ENCODE measurements at regions of chr1 and their contacts with region 1.

Region 1: DNA sequence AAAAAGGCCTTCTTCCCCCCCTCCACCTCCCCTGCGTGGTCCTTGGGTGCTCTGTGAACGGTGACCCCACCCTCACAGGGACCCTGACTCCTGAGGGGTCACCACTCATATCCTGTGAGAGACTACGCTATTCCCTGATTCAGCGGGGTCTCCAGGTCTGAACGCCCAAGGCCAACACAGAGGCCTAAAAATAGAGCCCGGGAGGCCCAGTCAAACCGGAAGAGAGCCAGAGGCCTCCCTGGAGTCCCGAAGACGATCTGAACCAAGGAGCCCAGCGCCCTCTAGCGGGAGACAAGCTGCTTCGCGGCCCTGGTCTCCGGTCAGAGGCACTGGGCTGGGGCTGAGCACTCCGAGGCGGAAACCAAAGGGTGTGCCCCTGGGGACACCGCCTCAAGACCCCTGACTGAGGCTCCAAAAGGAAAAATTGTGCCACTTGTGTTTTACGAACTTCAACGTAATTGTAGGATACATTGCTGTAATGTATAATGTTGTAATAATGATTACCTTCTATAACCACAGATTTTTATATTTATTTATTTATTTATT is 42.4 kb upstream of the PSEN2 start:
- DNase-seq: peak; percentile 95 to 97 (median 96)
- ATAC-seq: peak; percentile 100
- H3K4me3 ChIP-seq: no peak overlapping the region
- H3K27ac ChIP-seq: no peak overlapping the region; the same call in 2 of the 3 replicates
- H3K4me1 ChIP-seq: peaks cover 5 to 7% of the 10 kb centered on the region in 2 experiments; a peak in 3 of 5 replicates
- H3K27me3 ChIP-seq: peaks cover 46 to 59% of the 10 kb centered on the region in 2 experiments
- CTCF ChIP-seq: peak; percentile 95 to 97 (median 96)
- EP300 ChIP-seq: no peak
- POLR2A ChIP-seq: no peak
- RAD21 ChIP-seq: peak; percentile 94 to 99

Region 2: GRCh38 chr1:226547754-226548191 is 280.3 kb before region 1 on chr1:
- CTCF ChIA-PET with region 1: no interaction called
- POLR2A ChIA-PET with region 1: no interaction called
- in situ Hi-C with region 1: no loop called
- intact Hi-C with region 1: loop called (anchors 5 kb)
- DNase-seq: peak; percentile 69 to 83 (median 77)
- ATAC-seq: peak; percentile 97
- H3K4me3 ChIP-seq: no peak overlapping the region
- H3K27ac ChIP-seq: no peak overlapping the region
- H3K4me1 ChIP-seq: peaks cover 0 to 18% of the 10 kb centered on the region in 2 experiments; a peak in 3 of 5 replicates
- H3K27me3 ChIP-seq: peaks cover 7 to 48% of the 10 kb centered on the region in 2 experiments
- CTCF ChIP-seq: peak; percentile 92 to 97 (median 97)
- EP300 ChIP-seq: no peak
- POLR2A ChIP-seq: no peak
- RAD21 ChIP-seq: peak; percentile 86 to 88

Region 3: DNA sequence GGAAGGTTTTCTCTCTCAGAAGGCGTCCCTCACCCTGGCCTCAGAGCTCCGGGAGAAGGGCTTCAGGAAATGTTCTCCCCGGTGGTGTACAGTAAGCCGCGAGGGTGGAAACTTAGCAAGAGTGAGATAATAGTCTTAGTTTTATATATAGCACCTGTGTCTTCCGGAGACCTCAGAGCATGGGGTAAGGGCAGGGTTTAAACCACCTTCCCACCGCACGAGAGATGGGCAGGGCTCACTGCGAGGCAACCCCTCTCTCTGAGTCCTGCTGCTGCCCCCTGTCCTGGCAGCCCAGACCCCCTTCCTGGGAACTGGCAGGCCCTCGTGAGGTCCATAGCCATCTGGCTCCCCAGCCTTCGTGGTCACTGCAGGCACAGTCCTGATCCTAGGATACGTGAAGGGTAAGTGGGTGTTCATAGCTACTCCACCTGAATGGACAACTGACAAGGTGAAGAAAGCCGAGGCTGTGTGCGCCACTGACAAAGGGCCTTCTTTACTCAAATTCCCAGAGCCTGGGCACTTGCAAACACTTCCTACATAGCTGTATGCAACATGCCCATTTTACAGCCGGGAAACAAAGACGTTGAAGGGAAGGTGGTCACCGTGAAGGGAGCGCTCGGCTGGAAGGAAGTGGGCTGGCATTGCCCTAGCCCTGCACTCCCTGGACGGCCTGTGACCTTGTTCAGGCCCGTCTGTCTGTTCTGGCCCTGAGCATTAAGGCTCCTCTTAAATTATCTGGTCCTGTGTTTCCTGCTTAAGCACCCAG is 115.9 kb before region 1 on chr1:
- CTCF ChIA-PET with region 1: no interaction called
- POLR2A ChIA-PET with region 1: interaction called, 3 read pairs
- in situ Hi-C with region 1: no loop called
- intact Hi-C with region 1: loop called (anchors 2 kb)
- DNase-seq: no peak
- ATAC-seq: no peak
- H3K4me3 ChIP-seq: no peak overlapping the region
- H3K27ac ChIP-seq: no peak overlapping the region
- H3K4me1 ChIP-seq: 0 out of 5 replicates have a peak, but pooled peaks cover 0 to 4% of the 10 kb centered on the region in 2 experiments
- H3K27me3 ChIP-seq: peaks cover 31 to 50% of the 10 kb centered on the region in 2 experiments
- CTCF ChIP-seq: no peak
- EP300 ChIP-seq: no peak
- POLR2A ChIP-seq: no peak
- RAD21 ChIP-seq: no peak

Region 4: DNA sequence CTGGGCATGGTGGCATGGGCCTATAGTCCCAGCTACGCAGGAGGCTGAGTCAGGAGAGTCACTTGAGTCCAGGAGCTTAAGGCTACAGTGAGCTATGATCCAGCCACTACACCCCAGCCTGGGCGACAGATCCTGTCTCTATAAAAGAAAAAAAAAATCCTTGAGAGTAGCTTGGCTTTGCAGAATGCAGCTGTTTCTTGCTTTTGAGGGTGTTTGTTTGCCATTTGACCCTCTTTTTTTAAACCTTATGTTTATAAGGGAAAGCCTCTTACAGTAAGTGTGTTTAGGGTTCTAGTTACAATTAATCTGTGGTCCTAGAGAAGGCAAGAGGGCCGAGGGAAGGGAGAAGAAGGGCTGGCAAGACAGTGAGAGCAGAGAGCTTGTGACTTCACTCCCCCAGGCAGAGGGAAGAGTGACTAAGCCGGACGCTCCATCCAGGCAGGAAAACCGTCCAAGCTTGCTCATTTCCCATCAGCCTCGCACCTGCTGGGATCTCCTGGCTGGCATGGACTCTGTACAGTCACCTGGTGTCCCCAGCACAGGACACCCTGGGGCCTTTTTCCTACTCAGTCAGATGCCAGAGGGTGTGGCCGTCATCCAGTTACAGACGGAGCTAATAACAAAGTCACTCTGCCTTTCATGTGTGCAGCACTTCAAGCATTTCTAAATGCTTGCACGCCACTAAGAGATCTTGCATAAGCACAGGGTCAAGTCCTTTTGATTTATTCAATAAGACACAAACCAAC is 13.1 kb before region 1 on chr1:
- CTCF ChIA-PET with region 1: no interaction called
- POLR2A ChIA-PET with region 1: interaction called, 15 read pairs
- in situ Hi-C with region 1: no loop called
- intact Hi-C with region 1: no loop called
- DNase-seq: no peak
- ATAC-seq: peak; percentile 78
- H3K4me3 ChIP-seq: no peak overlapping the region
- H3K27ac ChIP-seq: no peak overlapping the region
- H3K4me1 ChIP-seq: no peaks in the 10 kb centered on the region
- H3K27me3 ChIP-seq: peaks cover 29 to 53% of the 10 kb centered on the region in 2 experiments
- CTCF ChIP-seq: no peak
- EP300 ChIP-seq: no peak
- POLR2A ChIP-seq: no peak
- RAD21 ChIP-seq: no peak

Measured in K562 (cell line).